Panc1 (cell line): ENCODE measurements at regions of chr10 and their contacts with region 1.

Region 1: DNA sequence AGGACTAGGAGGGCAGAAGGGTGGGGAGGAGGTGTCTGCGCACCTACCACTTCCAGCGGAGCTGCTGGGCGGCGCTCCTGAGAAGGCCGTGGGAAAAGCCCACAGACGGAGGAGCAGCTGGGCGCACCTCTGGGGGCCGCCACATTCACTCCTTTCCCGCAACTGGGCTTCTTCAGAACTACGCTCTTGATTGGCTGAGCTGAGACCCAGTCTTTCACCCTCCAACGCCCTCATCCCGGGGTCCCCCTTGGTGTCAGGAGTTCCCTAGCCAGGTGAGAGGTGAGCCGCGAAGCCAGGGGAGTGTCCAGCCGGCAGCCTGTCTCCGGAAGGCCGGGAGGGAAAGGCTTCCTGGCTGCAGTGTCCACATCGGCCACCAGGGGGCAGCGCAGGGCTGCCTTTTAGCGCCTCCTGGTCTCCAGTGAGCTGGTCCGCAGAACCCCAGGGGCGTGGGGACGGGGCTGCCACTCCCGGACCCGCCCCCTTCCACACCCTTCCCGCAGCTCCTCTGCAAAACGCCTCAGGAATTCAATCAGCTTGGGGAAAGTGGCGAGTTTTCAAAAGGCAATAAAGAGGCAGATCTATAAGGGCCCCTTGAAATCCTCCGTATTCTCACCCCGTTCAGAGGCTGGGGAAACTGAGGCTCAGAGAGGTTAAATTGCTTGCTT is 98.8 kb downstream of the CHST15 start:
- DNase-seq: peak; percentile 61
- ATAC-seq: peak; percentile 86
- H3K4me3 ChIP-seq: peak overlapping the region; percentile 54 to 66
- H3K27ac ChIP-seq: peak overlapping the region; percentile 67
- H3K4me1 ChIP-seq: peaks cover 5% of the 10 kb centered on the region; the same call in 1 of the 2 replicates
- H3K27me3 ChIP-seq: no peaks in the 10 kb centered on the region
- CTCF ChIP-seq: peak; percentile 99

Region 2: GRCh38 chr10:123678376-123678775 is 316.2 kb before region 1 on chr10:
- CTCF ChIA-PET with region 1: no interaction called
- POLR2A ChIA-PET with region 1: no interaction called
- in situ Hi-C with region 1: no loop called
- intact Hi-C with region 1: no loop called
- DNase-seq: no peak
- ATAC-seq: no peak; the same call in 1 of the 2 replicates
- H3K4me3 ChIP-seq: no peak overlapping the region
- H3K27ac ChIP-seq: no peak overlapping the region
- H3K4me1 ChIP-seq: no peaks in the 10 kb centered on the region
- H3K27me3 ChIP-seq: peaks cover 23% of the 10 kb centered on the region; the same call in 1 of the 2 replicates
- CTCF ChIP-seq: no peak

Region 3: GRCh38 chr10:123808906-123809305 is 185.6 kb before region 1 on chr10:
- CTCF ChIA-PET with region 1: no interaction called
- POLR2A ChIA-PET with region 1: no interaction called
- in situ Hi-C with region 1: no loop called
- intact Hi-C with region 1: no loop called
- DNase-seq: peak; percentile 25
- ATAC-seq: peak; percentile 83; the same call in 1 of the 2 replicates
- H3K4me3 ChIP-seq: no peak overlapping the region
- H3K27ac ChIP-seq: no peak overlapping the region
- H3K4me1 ChIP-seq: no peaks in the 10 kb centered on the region
- H3K27me3 ChIP-seq: peaks cover 12% of the 10 kb centered on the region
- CTCF ChIP-seq: no peak

Region 4: DNA sequence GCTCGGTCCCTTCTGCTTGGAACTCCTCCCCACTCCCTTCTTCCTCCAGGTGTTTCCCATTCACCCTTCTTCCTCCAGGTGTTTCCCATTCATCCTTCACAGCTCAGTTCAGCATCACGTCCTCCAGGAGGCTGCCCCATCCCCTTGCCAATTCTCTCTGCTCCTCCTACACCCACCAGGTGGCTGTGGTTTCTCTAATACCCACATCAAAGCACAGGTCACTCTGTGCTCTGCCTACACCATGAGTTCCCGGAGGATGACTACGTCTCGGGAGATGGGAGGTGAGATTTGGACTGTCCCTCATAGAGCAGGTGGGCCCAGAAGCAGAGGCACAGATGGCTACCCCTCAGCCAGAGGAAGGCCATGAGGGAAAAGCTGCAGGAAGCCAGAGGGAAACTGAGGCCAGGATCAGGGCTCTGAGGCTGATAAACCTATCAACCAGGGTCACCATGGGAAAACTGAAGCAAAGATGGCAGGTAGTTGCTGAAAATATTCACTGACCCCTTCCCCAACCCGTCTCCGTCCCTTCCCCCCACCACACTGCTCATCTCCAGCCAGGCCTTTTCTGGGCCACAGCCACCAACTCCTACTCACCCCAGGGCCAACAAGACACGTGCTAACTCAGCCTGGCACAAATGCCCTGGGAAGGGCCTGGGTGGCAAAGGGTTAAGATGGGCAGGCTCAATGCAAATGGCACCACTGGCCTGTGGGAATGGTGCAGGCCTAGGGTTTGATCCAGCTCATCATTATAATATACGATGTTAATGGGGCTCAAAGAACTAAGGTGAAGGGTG is 46.3 kb before region 1 on chr10:
- CTCF ChIA-PET with region 1: no interaction called
- POLR2A ChIA-PET with region 1: no interaction called
- in situ Hi-C with region 1: no loop called
- intact Hi-C with region 1: no loop called
- DNase-seq: no peak
- ATAC-seq: no peak
- H3K4me3 ChIP-seq: no peak overlapping the region
- H3K27ac ChIP-seq: no peak overlapping the region
- H3K4me1 ChIP-seq: no peaks in the 10 kb centered on the region
- H3K27me3 ChIP-seq: peaks cover 9% of the 10 kb centered on the region
- CTCF ChIP-seq: no peak

Region 5: GRCh38 chr10:124092860-124093773 is 98.6 kb after region 1 on chr10 and contains the start of gene CHST15:
- CTCF ChIA-PET with region 1: interaction called, 6 read pairs
- POLR2A ChIA-PET with region 1: no interaction called
- in situ Hi-C with region 1: no loop called
- intact Hi-C with region 1: loop called (anchors 5 kb)
- DNase-seq: peak; percentile 41
- ATAC-seq: peak; percentile 55
- H3K4me3 ChIP-seq: peak within 1 kb of the TSS; percentile 64
- H3K27ac ChIP-seq: peak within 1 kb of the TSS; percentile 76
- H3K4me1 ChIP-seq: peaks cover 32% of the 10 kb centered on the region
- H3K27me3 ChIP-seq: no peaks in the 10 kb centered on the region
- CTCF ChIP-seq: no peak; the same call in 1 of the 2 replicates
- total RNA-seq, gene CHST15: 33.2 TPM

Region 6: DNA sequence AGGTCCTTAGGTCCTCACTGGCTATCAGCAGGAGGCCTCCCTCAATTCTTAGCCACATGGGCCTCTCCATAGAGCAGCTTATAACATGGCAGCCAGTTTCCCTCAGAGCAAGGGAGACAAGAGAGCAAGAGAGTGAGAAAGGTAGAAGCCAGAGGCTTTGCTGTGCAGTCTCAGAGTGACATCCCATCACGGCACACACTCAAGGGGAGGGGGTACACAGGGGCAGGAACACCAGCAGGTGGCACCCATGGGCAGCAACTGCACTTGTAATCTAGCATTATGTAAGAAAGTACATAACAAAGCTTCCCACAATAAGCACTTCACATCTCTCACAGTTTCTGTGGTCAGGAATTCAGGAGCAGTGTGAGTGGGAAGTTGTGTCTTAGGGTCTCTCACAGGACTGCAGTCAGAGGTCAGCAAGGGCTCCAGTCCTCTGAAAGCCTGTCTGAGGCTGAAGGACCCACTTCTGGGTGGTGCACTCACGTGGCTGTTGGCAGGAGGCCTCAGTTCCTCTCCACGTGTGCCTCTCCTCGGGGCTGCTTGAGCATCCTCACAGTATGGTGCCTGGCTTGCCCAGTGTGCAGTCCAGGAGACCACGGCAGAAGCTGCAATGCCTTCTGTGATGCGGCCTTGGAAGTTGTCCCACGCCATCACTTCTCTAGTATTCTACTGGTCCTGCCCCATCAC is 264.7 kb after region 1 on chr10:
- CTCF ChIA-PET with region 1: no interaction called
- POLR2A ChIA-PET with region 1: no interaction called
- in situ Hi-C with region 1: no loop called
- intact Hi-C with region 1: loop called (anchors 10 kb)
- DNase-seq: no peak
- ATAC-seq: peak; percentile 64; the same call in 1 of the 2 replicates
- H3K4me3 ChIP-seq: no peak overlapping the region
- H3K27ac ChIP-seq: no peak overlapping the region
- H3K4me1 ChIP-seq: no peaks in the 10 kb centered on the region
- H3K27me3 ChIP-seq: no peaks in the 10 kb centered on the region
- CTCF ChIP-seq: no peak; the same call in 1 of the 2 replicates

Region 7: DNA sequence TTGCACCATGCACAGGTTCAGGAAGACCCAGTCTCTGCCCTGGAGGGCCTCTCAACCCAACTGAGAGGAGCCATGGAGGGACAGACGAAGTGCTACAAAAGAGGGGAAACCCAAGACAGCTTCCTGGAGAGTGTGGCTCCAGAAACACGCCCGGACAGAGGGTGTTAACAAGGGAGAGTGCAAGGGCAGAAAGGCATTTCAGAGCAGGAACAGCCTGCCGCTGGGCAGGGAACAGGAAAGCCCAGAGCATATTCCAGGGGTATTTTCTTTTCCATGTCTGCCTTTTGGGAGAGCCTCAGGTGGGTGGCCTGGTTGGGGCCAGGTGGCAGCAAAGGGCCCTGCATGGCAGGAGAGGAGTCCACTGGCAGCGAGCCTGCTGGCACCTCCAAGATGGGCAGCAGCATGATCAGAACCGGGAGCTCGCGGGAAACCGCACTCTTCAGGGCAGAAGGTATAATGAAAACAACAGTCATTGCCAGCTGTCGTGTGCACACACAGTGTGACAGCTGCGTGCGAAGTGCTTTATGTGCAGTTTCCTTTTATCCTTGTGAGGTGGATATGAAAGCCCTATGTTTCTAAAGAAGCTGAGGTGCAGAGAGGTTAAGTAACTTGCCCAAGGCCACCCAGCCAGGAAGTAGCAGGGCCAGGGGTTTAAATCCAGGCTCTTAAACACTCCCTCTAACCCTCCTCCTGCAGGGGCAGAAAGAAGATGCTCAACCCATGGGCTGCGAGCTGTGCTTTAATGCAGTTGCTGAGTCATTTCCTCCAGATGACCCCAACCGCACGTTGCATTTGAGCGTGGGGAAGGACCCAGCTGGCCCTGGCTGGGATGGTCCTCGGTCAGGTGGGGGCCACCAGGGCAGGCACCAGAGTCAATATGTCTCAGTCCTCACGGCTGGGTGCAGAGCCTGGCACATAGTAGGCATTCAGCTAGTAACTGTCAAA is 295.6 kb after region 1 on chr10:
- CTCF ChIA-PET with region 1: interaction called, 12 read pairs
- POLR2A ChIA-PET with region 1: no interaction called
- in situ Hi-C with region 1: no loop called
- intact Hi-C with region 1: no loop called
- DNase-seq: no peak
- ATAC-seq: peak; percentile 46
- H3K4me3 ChIP-seq: no peak overlapping the region
- H3K27ac ChIP-seq: no peak overlapping the region
- H3K4me1 ChIP-seq: no peaks in the 10 kb centered on the region
- H3K27me3 ChIP-seq: no peaks in the 10 kb centered on the region
- CTCF ChIP-seq: no peak

Region 8: GRCh38 chr10:124388823-124389612 is 394.5 kb after region 1 on chr10:
- CTCF ChIA-PET with region 1: interaction called, 52 read pairs
- POLR2A ChIA-PET with region 1: no interaction called
- in situ Hi-C with region 1: no loop called
- intact Hi-C with region 1: loop called (anchors 1 kb)
- DNase-seq: peak; percentile 36
- ATAC-seq: peak; percentile 96
- H3K4me3 ChIP-seq: peak overlapping the region; percentile 44 to 55
- H3K27ac ChIP-seq: peak overlapping the region; percentile 60
- H3K4me1 ChIP-seq: peaks cover 8% of the 10 kb centered on the region
- H3K27me3 ChIP-seq: no peaks in the 10 kb centered on the region
- CTCF ChIP-seq: peak; percentile 99

Region 9: GRCh38 chr10:124827474-124827873 is 832.9 kb after region 1 on chr10:
- CTCF ChIA-PET with region 1: no interaction called
- POLR2A ChIA-PET with region 1: no interaction called
- in situ Hi-C with region 1: no loop called
- intact Hi-C with region 1: no loop called
- DNase-seq: no peak
- ATAC-seq: no peak
- H3K4me3 ChIP-seq: no peak overlapping the region
- H3K27ac ChIP-seq: no peak overlapping the region
- H3K4me1 ChIP-seq: no peaks in the 10 kb centered on the region
- H3K27me3 ChIP-seq: no peaks in the 10 kb centered on the region
- CTCF ChIP-seq: peak; percentile 74; the same call in 1 of the 2 replicates